Heart left ventricle (tissue), 16 donors: ENCODE measurements at regions of chr6 and their contacts with region 1.

Region 1: GRCh38 chr6:170049641-170050561 is 241.0 kb downstream of the DLL1 start:
- DNase-seq: peak; percentile 70 to 94 (median 88)
- ATAC-seq: peak; percentile 83 to 91 (median 91)
- H3K4me3 ChIP-seq: no peak overlapping the region
- H3K27ac ChIP-seq: peak overlapping the region in 11 of 12 donors; percentile 10 to 88 (median 57)
- H3K4me1 ChIP-seq: peaks cover 0 to 36% (median 10%) of the 10 kb centered on the region in 12 donors
- H3K27me3 ChIP-seq: no peaks in the 10 kb centered on the region
- CTCF ChIP-seq: no peak
- POLR2A ChIP-seq: no peak

Region 2: DNA sequence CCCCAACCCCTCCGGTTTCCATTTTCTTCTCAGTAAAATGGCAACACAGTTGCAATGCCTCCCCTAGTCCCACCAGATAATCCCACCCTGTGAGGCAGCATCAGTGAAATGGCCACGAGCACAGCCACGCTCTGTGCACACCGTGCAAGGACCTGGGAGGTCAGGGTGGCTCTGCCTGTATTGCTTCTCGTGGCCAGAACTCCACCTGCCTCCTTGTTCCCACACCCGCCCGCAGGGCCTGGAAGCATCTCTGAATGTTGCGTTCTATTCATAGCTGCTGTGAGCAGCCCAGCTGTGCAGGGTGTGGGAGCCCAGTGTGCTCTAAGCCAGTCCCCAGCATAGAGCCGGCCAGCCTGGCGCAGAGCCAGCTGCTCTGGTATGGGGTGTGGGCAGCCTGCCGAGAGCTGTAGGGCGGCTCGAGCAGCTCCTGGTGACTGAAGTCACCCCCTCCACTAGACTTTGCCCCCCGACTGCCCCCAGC is 79.8 kb after region 1 on chr6:
- intact Hi-C with region 1: loop called in 1 of 10 experiments (anchors 5 kb)
- DNase-seq: peak; percentile 69 to 94 (median 86)
- ATAC-seq: peak; percentile 89 to 93 (median 90)
- H3K4me3 ChIP-seq: no peak overlapping the region
- H3K27ac ChIP-seq: peak overlapping the region in 8 of 12 donors; percentile 34 to 72 (median 54)
- H3K4me1 ChIP-seq: peaks cover 0 to 53% (median 22%) of the 10 kb centered on the region in 12 donors
- H3K27me3 ChIP-seq: no peaks in the 10 kb centered on the region
- CTCF ChIP-seq: no peak
- POLR2A ChIP-seq: no peak

Region 3: GRCh38 chr6:170306324-170307079 is 256.6 kb after region 1 on chr6 and contains the start of gene FAM120B:
- intact Hi-C with region 1: no loop called
- DNase-seq: peak; percentile 97 to 99 (median 98)
- ATAC-seq: peak; percentile 98 to 99 (median 99)
- H3K4me3 ChIP-seq: peak within 1 kb of the TSS; percentile 77 to 99 (median 94)
- H3K27ac ChIP-seq: peak within 1 kb of the TSS; percentile 79 to 96 (median 92)
- H3K4me1 ChIP-seq: peaks cover 5 to 50% (median 35%) of the 10 kb centered on the region in 12 donors
- H3K27me3 ChIP-seq: no peaks in the 10 kb centered on the region
- CTCF ChIP-seq: no peak
- POLR2A ChIP-seq: peak; percentile 32 to 95
- total RNA-seq, gene FAM120B: 12.1 to 29.4 (median 19.9) TPM

Region 4: GRCh38 chr6:170347091-170347490 is 297.2 kb after region 1 on chr6:
- intact Hi-C with region 1: no loop called
- DNase-seq: no peak
- ATAC-seq: no peak
- H3K4me3 ChIP-seq: no peak overlapping the region
- H3K27ac ChIP-seq: peak overlapping the region in 3 of 12 donors; percentile 3 to 63 (median 4)
- H3K4me1 ChIP-seq: peaks cover 0 to 34% (median 14%) of the 10 kb centered on the region in 12 donors
- H3K27me3 ChIP-seq: no peaks in the 10 kb centered on the region
- CTCF ChIP-seq: no peak
- POLR2A ChIP-seq: no peak